Activated B cell treated with CpG ODN at 0.5 μM for 24 hours (primary cell): ENCODE measurements at regions of chrX and their contacts with region 1.

Region 1: DNA sequence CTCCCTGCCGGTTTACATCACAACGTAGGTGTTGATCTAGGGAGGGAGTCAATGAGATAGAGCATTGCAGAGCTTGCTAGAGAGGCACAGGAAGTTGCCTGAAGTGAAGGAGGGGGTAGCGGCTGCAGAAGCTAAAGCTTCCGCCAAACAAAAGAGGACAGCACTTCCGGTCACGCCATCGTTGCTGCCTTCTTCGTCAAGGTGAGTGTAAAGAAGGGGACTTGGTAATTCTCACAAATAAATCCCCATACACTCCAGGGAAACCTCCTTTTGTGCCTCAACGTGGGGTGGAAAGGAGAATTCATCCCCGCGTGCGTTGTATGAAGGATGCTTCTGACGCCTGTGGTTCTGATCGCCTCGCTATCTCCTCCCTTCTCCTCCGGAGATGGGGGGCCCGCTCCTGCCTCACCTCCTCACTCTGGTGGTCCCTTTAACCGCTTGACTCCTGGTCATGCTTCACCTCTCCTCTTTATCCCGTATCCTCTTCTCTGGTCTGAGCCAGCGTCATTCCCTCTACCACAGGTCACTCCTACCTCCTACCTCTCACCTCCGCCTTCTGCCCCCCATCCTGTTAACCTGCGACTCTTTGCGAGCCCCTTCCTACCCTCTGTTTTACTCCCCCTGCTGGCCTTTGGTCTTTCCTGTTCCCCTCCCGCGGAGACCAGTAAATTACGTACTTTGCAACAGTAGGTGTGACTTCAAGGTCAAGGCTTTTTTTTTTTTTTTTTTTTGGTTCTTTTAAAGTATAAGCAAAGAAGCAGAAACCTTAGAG is 59.9 kb downstream of the GSPT2 start:
- DNase-seq: peak; percentile 19
- ATAC-seq: peak; percentile 84
- H3K4me3 Mint-ChIP-seq: peak overlapping the region; percentile 94
- H3K27ac Mint-ChIP-seq: peak overlapping the region; percentile 92
- H3K4me1 Mint-ChIP-seq: peaks cover 15% of the 10 kb centered on the region
- H3K27me3 Mint-ChIP-seq: no peaks in the 10 kb centered on the region
- CTCF ChIP-seq: no peak

Region 2: GRCh38 chrX:50927127-50927526 is 876.0 kb before region 1 on chrX:
- CTCF ChIA-PET with region 1: no interaction called
- POLR2A ChIA-PET with region 1: no interaction called
- intact Hi-C with region 1: no loop called
- DNase-seq: no peak
- ATAC-seq: no peak
- H3K4me3 Mint-ChIP-seq: no peak overlapping the region
- H3K27ac Mint-ChIP-seq: no peak overlapping the region
- H3K4me1 Mint-ChIP-seq: no peaks in the 10 kb centered on the region
- H3K27me3 Mint-ChIP-seq: no peaks in the 10 kb centered on the region
- CTCF ChIP-seq: no peak

Region 3: DNA sequence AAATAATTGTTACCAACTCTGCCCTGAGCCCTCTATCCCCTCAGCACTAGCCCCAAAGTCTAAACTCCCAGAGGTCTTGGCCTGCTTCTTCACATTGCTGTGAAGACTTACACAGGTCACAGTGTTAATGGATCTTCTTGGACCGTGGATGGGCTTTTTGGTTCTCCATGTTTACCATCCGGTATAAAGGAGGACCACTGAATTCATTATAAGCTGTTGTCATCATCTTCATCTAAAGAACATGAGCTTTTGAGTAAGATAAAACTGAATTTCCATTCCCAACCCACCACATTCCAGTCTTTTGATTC is 315.2 kb before region 1 on chrX:
- CTCF ChIA-PET with region 1: no interaction called
- POLR2A ChIA-PET with region 1: no interaction called
- intact Hi-C with region 1: loop called (anchors 5 kb)
- DNase-seq: no peak
- ATAC-seq: no peak
- H3K4me3 Mint-ChIP-seq: no peak overlapping the region
- H3K27ac Mint-ChIP-seq: no peak overlapping the region
- H3K4me1 Mint-ChIP-seq: no peaks in the 10 kb centered on the region
- H3K27me3 Mint-ChIP-seq: no peaks in the 10 kb centered on the region
- CTCF ChIP-seq: no peak

Region 4: GRCh38 chrX:51614353-51615012 is 188.6 kb before region 1 on chrX:
- CTCF ChIA-PET with region 1: no interaction called
- POLR2A ChIA-PET with region 1: no interaction called
- intact Hi-C with region 1: loop called (anchors 2 kb)
- DNase-seq: no peak
- ATAC-seq: no peak
- H3K4me3 Mint-ChIP-seq: no peak overlapping the region
- H3K27ac Mint-ChIP-seq: no peak overlapping the region
- H3K4me1 Mint-ChIP-seq: peaks cover 3% of the 10 kb centered on the region
- H3K27me3 Mint-ChIP-seq: peaks cover 20% of the 10 kb centered on the region
- CTCF ChIP-seq: no peak

Region 5: GRCh38 chrX:51641421-51642021 is 161.6 kb before region 1 on chrX:
- CTCF ChIA-PET with region 1: no interaction called
- POLR2A ChIA-PET with region 1: no interaction called
- intact Hi-C with region 1: loop called (anchors 1 kb)
- DNase-seq: no peak
- ATAC-seq: no peak
- H3K4me3 Mint-ChIP-seq: no peak overlapping the region
- H3K27ac Mint-ChIP-seq: no peak overlapping the region
- H3K4me1 Mint-ChIP-seq: no peaks in the 10 kb centered on the region
- H3K27me3 Mint-ChIP-seq: peaks cover 10% of the 10 kb centered on the region
- CTCF ChIP-seq: no peak

Region 6: GRCh38 chrX:51743179-51743957 is 59.7 kb before region 1 on chrX and contains the start of gene GSPT2:
- CTCF ChIA-PET with region 1: no interaction called
- POLR2A ChIA-PET with region 1: interaction called, 3 read pairs
- intact Hi-C with region 1: loop called (anchors 1 kb)
- DNase-seq: peak; percentile 34
- ATAC-seq: peak; percentile 97
- H3K4me3 Mint-ChIP-seq: peak within 1 kb of the TSS; percentile 88
- H3K27ac Mint-ChIP-seq: peak within 1 kb of the TSS; percentile 79
- H3K4me1 Mint-ChIP-seq: peaks cover 20% of the 10 kb centered on the region
- H3K27me3 Mint-ChIP-seq: peaks cover 2% of the 10 kb centered on the region
- CTCF ChIP-seq: no peak
- total RNA-seq, gene GSPT2: 12.9 and 13.9 TPM in 2 replicates

Region 7: DNA sequence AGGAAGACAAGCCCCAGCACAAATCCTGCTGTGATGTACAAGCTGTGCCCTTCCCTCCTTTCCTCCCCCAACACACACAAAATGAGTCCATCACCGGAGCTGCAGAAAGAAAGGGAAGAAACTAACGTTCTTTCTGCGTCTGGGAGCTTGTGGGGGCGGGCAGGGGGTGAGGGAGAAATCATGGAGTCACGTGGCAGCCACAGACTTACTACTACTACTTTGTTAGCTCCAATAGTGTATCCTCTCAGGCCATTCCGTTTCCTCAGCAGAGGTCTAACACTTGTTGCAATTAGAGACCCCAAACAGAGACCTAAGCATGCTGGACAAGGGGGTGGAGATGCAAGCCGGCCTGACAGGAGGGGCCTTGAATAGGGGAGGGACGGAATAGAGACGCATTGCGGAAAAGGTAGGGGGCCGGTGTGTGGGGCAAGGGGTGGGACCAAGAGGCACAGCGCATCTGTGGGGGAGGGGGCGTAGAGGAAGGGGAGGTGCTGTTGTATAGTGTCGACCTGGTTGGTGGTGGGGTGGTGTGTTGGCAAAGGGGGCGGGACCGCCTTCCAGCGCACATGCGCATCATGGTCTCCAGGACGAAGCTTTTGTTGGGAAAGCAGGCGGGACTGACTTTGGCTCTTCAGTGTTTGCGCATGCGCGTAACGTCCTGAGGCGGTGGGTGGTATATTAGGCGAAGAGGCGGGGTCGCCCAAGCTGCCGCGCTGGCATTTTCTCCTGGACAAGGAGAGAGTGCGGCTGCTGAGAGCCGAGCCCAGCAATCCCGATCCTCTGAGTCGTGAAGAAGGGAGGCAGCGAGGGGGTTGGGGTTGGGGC is 90.0 kb after region 1 on chrX and contains the start of gene MAGED1:
- CTCF ChIA-PET with region 1: no interaction called
- POLR2A ChIA-PET with region 1: no interaction called
- intact Hi-C with region 1: loop called (anchors 1 kb)
- DNase-seq: peak; percentile 58
- ATAC-seq: peak; percentile 88
- H3K4me3 Mint-ChIP-seq: peak within 1 kb of the TSS; percentile 92
- H3K27ac Mint-ChIP-seq: peak within 1 kb of the TSS; percentile 87
- H3K4me1 Mint-ChIP-seq: peaks cover 30% of the 10 kb centered on the region
- H3K27me3 Mint-ChIP-seq: no peaks in the 10 kb centered on the region
- CTCF ChIP-seq: no peak
- total RNA-seq, gene MAGED1: 28.9 and 32.2 TPM in 2 replicates

Region 8: GRCh38 chrX:52261463-52262194 is 458.5 kb after region 1 on chrX:
- CTCF ChIA-PET with region 1: no interaction called
- POLR2A ChIA-PET with region 1: no interaction called
- intact Hi-C with region 1: loop called (anchors 1 kb)
- DNase-seq: peak; percentile 73
- ATAC-seq: peak; percentile 95
- H3K4me3 Mint-ChIP-seq: peak overlapping the region; percentile 92
- H3K27ac Mint-ChIP-seq: peak overlapping the region; percentile 96
- H3K4me1 Mint-ChIP-seq: peaks cover 11% of the 10 kb centered on the region
- H3K27me3 Mint-ChIP-seq: no peaks in the 10 kb centered on the region
- CTCF ChIP-seq: no peak